ENCODE measurements at regions of chr9 and their contacts with region 1.

Region 1: DNA sequence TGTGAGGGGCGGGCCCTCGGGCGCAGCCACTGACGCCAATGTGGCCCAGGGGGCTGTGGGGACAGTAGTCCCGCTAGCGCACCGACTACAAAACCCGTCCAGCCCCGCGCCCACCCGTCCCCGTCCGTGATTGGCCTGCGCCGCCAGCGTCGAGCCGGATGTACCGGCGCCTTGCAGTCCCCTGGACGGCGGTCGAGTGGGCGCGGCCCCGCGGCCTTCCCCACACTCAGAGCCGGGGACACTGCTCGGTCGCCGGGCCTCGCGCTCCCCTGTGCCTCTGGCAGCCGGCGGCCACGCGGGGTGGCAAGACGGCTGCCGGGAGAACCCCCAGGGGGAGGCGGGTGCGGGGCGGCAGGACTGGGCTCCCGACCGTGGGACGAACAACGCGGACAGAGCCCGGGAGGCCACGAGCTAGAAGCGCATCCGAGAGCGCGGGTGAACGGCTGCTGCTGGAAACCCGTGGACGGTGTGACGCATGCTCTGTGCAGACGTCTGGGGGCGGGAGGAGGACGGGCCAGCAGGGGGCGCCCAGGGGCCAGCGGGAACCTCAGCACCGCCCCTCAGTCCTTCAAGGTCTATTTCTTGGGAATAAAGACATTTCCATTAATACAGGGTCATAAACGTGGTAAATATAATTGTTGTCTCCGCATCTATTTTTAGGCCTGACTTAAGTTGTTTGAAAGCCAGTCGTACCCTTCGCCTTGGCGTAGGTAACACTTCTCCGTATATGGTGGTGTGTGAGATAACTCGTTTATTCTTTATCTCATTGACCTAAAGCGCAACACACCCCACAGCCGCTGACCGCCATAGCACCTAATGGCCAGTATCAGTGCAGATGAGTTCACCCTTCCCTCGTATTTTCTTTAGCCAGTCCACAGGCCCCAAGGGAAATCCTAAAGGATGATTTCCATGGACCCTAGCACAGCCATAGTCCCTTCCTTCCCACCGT is 629 bp upstream of the BICD2 start:
- DNase-seq: peak; percentile 82
- H3K4me3 ChIP-seq: peak overlapping the region; percentile 87
- H3K27ac ChIP-seq: peak overlapping the region; percentile 86
- H3K4me1 ChIP-seq: peaks cover 48% of the 10 kb centered on the region
- CTCF ChIP-seq: peak; percentile 97

Region 2: GRCh38 chr9:92293452-92294296 is 471.6 kb before region 1 on chr9 and contains the start of gene IARS1:
- CTCF ChIA-PET with region 1: no interaction called
- POLR2A ChIA-PET with region 1: no interaction called
- intact Hi-C with region 1: loop called (anchors 2 kb)
- DNase-seq: peak; percentile 98
- H3K4me3 ChIP-seq: peak within 1 kb of the TSS; percentile 91
- H3K27ac ChIP-seq: peak within 1 kb of the TSS; percentile 92
- H3K4me1 ChIP-seq: peaks cover 63% of the 10 kb centered on the region
- CTCF ChIP-seq: peak; percentile 66
- total RNA-seq, gene IARS1: 352 and 392 TPM in 2 replicates

Region 3: DNA sequence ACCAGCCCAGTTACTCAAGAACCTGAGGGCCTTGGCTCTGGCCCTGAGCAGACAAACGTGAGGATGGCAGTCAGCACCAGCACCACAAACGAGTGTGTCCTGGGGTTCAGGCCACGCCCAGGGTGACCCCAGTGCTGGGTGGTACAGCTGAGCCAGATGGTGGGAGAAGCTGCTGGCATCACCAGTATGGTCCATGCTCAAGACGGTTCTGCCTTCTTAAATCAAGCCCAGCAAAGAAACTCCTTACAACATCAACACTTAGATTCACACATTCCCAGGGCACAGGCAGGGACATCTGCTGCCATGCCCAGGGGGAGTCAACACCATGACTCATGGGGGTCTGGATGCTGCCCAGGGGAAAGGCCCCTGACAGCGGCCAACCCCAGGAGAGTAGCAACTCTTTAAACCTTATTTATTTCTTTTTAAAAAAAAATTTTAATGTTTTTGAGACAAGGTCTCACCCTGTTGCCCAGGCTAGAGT is 126.6 kb before region 1 on chr9:
- CTCF ChIA-PET with region 1: no interaction called
- POLR2A ChIA-PET with region 1: no interaction called
- intact Hi-C with region 1: no loop called
- DNase-seq: no peak
- H3K4me3 ChIP-seq: no peak overlapping the region
- H3K27ac ChIP-seq: no peak overlapping the region
- H3K4me1 ChIP-seq: no peaks in the 10 kb centered on the region
- CTCF ChIP-seq: no peak

Region 4: DNA sequence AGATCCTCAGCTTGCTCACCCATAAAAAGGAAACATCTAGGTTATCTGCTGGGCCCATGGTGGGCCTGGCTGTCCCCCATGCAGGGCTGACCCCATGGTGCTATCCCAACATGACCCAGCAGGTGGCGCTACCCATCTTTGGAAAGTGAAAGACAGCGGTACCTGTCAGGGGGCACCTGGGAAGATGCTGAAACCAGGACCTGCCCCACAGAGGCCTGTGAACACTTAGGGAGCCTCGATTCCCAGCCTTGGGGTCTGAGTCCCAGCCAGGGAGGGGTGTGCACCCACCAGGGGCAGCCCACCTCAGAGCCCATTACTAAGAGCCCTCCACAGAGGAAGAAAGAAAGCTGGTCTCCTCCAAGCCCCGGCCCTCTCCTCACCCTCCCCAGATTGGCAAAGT is 48.7 kb before region 1 on chr9:
- CTCF ChIA-PET with region 1: interaction called, 8 read pairs
- POLR2A ChIA-PET with region 1: interaction called, 3 read pairs
- intact Hi-C with region 1: loop called (anchors 1 kb)
- DNase-seq: peak; percentile 80
- H3K4me3 ChIP-seq: peak overlapping the region; percentile 33
- H3K27ac ChIP-seq: peak overlapping the region; percentile 62
- H3K4me1 ChIP-seq: peaks cover 58% of the 10 kb centered on the region
- CTCF ChIP-seq: peak; percentile 97

Region 5: DNA sequence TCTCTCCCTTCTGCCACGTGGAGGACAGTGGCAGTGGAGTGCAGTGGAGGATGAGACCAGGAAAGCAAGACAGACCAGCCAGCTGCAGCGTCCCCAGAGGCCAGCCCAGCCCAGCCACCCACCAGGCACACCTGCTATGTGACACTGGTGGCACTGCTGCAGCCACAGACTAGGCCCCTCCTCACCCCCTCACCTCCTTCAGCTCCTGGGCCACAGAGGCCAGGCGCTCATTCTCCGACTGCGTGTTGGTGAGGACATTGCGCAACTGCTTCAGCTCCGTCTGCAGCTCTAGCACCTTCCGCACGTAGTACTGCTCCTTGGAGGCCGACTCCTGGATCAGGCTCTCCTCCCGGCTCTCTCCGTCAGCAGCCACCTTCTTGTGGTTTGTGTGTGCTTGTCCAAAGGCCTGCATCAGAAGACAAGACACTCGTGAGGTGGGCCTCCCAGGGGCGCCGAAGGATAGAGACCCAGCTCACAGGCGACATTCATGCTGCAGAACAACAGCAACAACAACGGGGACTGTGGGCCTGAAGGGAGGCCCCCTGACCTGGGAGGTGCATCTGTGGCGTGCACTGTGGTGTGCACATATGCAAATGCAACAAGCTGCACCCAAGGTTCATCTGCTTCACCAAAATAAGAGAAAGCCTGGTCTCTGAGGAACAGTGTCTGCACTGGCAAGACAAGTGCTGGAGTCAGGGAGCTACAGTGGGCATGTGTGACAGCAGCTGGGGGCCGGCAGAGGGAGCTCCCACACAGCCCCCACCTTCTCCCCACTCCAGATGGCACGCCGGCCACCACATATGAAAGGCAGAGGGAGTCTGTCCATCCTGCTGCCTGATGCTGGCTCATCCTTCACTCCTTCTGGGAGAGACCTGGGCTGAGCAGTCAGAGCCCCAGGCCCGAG is 36.2 kb before region 1 on chr9:
- CTCF ChIA-PET with region 1: interaction called, 4 read pairs
- POLR2A ChIA-PET with region 1: interaction called, 5 read pairs
- intact Hi-C with region 1: loop called (anchors 1 kb)
- DNase-seq: peak; percentile 91
- H3K4me3 ChIP-seq: peak overlapping the region; percentile 63
- H3K27ac ChIP-seq: peak overlapping the region; percentile 83
- H3K4me1 ChIP-seq: peaks cover 85% of the 10 kb centered on the region
- CTCF ChIP-seq: peak; percentile 93

Region 6: GRCh38 chr9:93064392-93065134 is 299.3 kb after region 1 on chr9:
- CTCF ChIA-PET with region 1: no interaction called
- POLR2A ChIA-PET with region 1: no interaction called
- intact Hi-C with region 1: loop called (anchors 10 kb)
- DNase-seq: peak; percentile 98
- H3K4me3 ChIP-seq: peak overlapping the region; percentile 79
- H3K27ac ChIP-seq: peak overlapping the region; percentile 95
- H3K4me1 ChIP-seq: peaks cover 61% of the 10 kb centered on the region
- CTCF ChIP-seq: no peak

Measured in OCI-LY7 (cell line).